PC-9 (cell line): ENCODE measurements at regions of chr2 and their contacts with region 1.

Region 1: GRCh38 chr2:144241801-144242200 is 278.1 kb downstream of the ZEB2 start:
- DNase-seq: no peak
- H3K4me3 ChIP-seq: no peak overlapping the region
- H3K27ac ChIP-seq: no peak overlapping the region
- H3K4me1 ChIP-seq: peaks cover 14% of the 10 kb centered on the region
- H3K27me3 ChIP-seq: no peaks in the 10 kb centered on the region
- CTCF ChIP-seq: no peak

Region 2: DNA sequence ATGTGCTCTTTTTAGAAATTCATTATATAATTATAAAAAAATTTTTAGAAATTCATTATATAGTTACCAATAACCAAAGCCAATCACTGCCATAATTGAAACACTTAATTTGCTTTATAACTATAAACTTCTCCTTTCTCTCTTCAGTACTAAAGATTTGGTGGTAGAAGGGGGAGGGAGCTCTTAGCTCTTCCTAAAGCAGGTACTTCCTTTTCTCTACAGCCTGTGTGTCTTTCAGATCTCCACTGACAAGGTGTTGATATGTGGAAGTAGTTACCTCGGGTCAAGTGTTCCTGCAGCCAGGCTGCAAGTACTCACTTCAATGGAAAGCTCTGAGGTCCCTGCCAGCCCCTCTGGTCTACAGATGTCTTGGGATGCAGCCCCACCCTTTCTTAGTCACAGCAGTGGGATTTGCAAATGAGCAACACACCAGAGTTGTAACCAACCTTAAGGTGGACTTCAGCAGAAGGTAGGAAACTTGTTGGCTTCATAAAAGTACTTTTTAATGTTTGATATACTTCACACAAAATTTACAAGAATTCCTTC is 422.5 kb before region 1 on chr2:
- CTCF ChIA-PET with region 1: no interaction called
- POLR2A ChIA-PET with region 1: interaction called, 11 read pairs
- intact Hi-C with region 1: no loop called
- DNase-seq: no peak
- H3K4me3 ChIP-seq: no peak overlapping the region
- H3K27ac ChIP-seq: no peak overlapping the region
- H3K4me1 ChIP-seq: no peaks in the 10 kb centered on the region
- H3K27me3 ChIP-seq: no peaks in the 10 kb centered on the region
- CTCF ChIP-seq: no peak